H1 (cell line): ENCODE measurements at regions of chr10 and their contacts with region 1.

Region 1: DNA sequence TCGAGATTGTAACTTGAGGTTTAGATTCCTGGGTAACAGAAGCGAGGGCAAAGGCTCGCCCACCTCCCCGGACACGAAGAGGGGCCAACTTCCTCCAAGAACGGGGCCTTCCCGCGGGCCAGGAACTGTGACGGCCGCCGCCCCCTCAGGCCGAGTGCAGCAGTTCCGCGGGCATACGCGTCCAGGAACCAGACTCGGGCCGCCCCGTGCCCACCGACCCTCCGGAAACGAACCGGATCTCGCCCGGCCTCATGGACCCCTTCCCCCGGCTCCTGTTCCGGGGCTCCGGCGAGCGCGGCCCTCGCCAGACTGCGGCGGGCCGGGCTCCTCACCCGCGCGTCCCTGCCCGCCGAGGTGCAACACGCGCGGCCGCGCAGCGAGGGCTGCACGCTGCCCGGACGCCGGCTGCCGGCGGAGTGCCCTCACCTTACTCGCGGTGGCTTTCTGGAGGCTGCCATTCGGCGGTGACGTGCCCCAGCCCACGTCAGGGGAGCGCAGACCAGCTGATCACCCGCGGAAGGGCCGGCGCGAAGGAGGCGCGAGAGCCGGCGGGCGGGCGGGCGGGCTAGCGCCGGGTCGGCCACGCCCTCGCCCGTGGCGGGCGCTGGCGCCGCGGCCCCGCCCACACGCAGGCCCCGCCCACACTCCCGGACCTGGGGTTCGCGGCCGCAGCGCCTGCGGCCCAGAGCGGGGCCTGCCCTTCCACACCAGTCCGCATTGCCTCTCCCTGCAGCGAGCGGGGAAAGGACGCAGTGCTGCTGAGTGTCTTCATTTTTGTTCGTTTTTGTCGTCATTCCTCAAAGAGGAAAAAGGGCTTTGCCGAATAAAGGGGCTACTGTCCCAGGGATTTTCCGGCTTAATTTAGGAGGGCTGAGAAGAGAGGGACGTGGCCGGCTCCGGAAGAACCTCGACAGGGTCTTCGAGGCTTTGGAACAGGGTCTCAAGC is at the start of gene XPNPEP1:
- DNase-seq: peak in 1 of 2 experiments; percentile 89
- H3K4me3 ChIP-seq: peak within 1 kb of the TSS; percentile 42 to 87 (median 70)
- H3K27ac ChIP-seq: no peak within 1 kb of the TSS; the same call in 1 of the 2 replicates
- H3K4me1 ChIP-seq: peaks cover 6 to 20% (median 12%) of the 10 kb centered on the region in 4 experiments
- H3K27me3 ChIP-seq: peaks cover 0 to 11% (median 9%) of the 10 kb centered on the region in 4 experiments; a peak in 5 of 7 replicates
- CTCF ChIP-seq: no peak
- EP300 ChIP-seq: no peak
- POLR2A ChIP-seq: peak; percentile 79 to 83
- RAD21 ChIP-seq: no peak
- total RNA-seq, gene XPNPEP1: 49.7 and 61.1 TPM in 2 replicates

Region 2: GRCh38 chr10:109934958-109935706 is 11.9 kb after region 1 on chr10:
- CTCF ChIA-PET with region 1: interaction called, 8 read pairs
- POLR2A ChIA-PET with region 1: interaction called, 48 read pairs
- DNase-seq: peak; percentile 70 to 73
- H3K4me3 ChIP-seq: peak overlapping the region in 1 of 4 experiments; percentile 44; a peak in 2 of 8 replicates
- H3K27ac ChIP-seq: peak overlapping the region; percentile 70; the same call in 1 of the 2 replicates
- H3K4me1 ChIP-seq: peaks cover 11 to 25% (median 24%) of the 10 kb centered on the region in 4 experiments
- H3K27me3 ChIP-seq: no peaks in the 10 kb centered on the region
- CTCF ChIP-seq: no peak
- EP300 ChIP-seq: peak in 1 of 2 experiments; percentile 89; a peak in 1 of 3 replicates
- POLR2A ChIP-seq: peak in 1 of 2 experiments; percentile 89; a peak in 2 of 3 replicates
- RAD21 ChIP-seq: no peak